ENCODE measurements at regions of chr17 and their contacts with region 1.

Region 1: DNA sequence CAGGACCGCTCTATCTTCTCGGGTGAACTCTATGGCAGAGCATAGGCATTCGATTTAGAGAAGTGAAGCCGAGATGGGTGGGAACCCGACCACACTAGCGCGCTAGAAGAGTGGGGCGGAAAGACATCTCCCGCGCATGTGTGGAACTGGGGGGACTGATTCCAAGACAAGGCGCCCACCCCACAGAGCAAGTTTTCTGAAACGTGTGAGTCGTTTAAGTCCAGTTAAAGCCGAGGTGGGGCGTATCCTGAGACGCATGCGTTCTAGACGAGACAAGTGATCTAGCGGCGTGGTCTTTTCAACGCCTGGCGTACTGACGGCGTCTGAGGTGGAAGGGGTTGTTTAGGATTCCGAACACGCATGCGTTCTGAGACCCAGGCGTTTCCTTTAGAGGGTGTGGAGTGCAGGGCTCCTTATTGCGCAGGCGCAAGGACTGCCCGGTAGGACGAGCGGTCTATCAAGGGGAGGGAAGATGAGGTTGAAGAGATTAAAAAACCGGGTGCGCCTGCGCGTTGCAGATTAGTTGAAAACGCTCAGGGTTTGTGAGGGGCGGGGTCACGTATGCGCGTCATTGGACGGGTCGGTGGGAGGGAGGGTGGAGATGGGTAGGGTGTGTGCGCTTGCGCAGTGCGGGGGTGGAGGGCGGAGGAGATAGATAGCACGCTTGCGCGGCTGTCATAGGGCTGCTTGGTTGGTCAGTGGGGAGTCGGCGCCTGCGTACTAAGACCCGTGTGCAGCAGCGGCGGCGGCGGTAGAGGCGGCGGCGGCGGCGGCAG is at the start of gene EIF5A:
- DNase-seq: peak; percentile 99 to 100 (median 100)
- ATAC-seq: peak; percentile 79
- H3K4me3 ChIP-seq: peak within 1 kb of the TSS; percentile 78
- H3K4me3 Mint-ChIP-seq: peak within 1 kb of the TSS; percentile 90 to 99 (median 95)
- H3K27ac ChIP-seq: peak within 1 kb of the TSS; percentile 100
- H3K27ac Mint-ChIP-seq: peak within 1 kb of the TSS; percentile 98 to 100 (median 99)
- H3K4me1 ChIP-seq: peaks cover 19 to 20% of the 10 kb centered on the region in 2 donors
- H3K4me1 Mint-ChIP-seq: peaks cover 28 to 44% (median 35%) of the 10 kb centered on the region in 7 donors
- H3K27me3 ChIP-seq: no peaks in the 10 kb centered on the region
- H3K27me3 Mint-ChIP-seq: peaks cover 0 to 9% (median 0%) of the 10 kb centered on the region in 5 donors
- total RNA-seq, gene EIF5A: 237 to 666 (median 453) TPM

Region 2: GRCh38 chr17:7214300-7215135 is 92.6 kb before region 1 on chr17:
- CTCF ChIA-PET with region 1: no interaction called
- POLR2A ChIA-PET with region 1: interaction called, 3 read pairs
- intact Hi-C with region 1: loop called (anchors 1 kb)
- DNase-seq: peak; percentile 96 to 99 (median 97)
- ATAC-seq: peak; percentile 90
- H3K4me3 ChIP-seq: peak overlapping the region; percentile 61
- H3K4me3 Mint-ChIP-seq: peak overlapping the region; percentile 76 to 97 (median 94)
- H3K27ac ChIP-seq: peak overlapping the region; percentile 97
- H3K27ac Mint-ChIP-seq: peak overlapping the region; percentile 90 to 100 (median 99)
- H3K4me1 ChIP-seq: peaks cover 25 to 49% of the 10 kb centered on the region in 2 donors
- H3K4me1 Mint-ChIP-seq: peaks cover 36 to 69% (median 65%) of the 10 kb centered on the region in 7 donors
- H3K27me3 ChIP-seq: no peaks in the 10 kb centered on the region
- H3K27me3 Mint-ChIP-seq: peaks cover 0 to 16% (median 0%) of the 10 kb centered on the region in 5 donors

Region 3: GRCh38 chr17:7296189-7296902 is 10.8 kb before region 1 on chr17:
- CTCF ChIA-PET with region 1: interaction called, 4 read pairs
- POLR2A ChIA-PET with region 1: interaction called, 17 read pairs
- intact Hi-C with region 1: loop called in 1 of 2 experiments (anchors 1 kb)
- DNase-seq: peak in 5 of 9 donors; percentile 41 to 86 (median 62)
- ATAC-seq: peak; percentile 63
- H3K4me3 ChIP-seq: no peak overlapping the region
- H3K4me3 Mint-ChIP-seq: peak overlapping the region; percentile 18 to 89 (median 52)
- H3K27ac ChIP-seq: no peak overlapping the region
- H3K27ac Mint-ChIP-seq: peak overlapping the region in 2 of 9 donors; percentile 51 to 66
- H3K4me1 ChIP-seq: peaks cover 12 to 26% of the 10 kb centered on the region in 2 donors
- H3K4me1 Mint-ChIP-seq: peaks cover 6 to 30% (median 25%) of the 10 kb centered on the region in 7 donors
- H3K27me3 ChIP-seq: no peaks in the 10 kb centered on the region
- H3K27me3 Mint-ChIP-seq: peaks cover 4 to 54% (median 18%) of the 10 kb centered on the region in 5 donors

Region 4: DNA sequence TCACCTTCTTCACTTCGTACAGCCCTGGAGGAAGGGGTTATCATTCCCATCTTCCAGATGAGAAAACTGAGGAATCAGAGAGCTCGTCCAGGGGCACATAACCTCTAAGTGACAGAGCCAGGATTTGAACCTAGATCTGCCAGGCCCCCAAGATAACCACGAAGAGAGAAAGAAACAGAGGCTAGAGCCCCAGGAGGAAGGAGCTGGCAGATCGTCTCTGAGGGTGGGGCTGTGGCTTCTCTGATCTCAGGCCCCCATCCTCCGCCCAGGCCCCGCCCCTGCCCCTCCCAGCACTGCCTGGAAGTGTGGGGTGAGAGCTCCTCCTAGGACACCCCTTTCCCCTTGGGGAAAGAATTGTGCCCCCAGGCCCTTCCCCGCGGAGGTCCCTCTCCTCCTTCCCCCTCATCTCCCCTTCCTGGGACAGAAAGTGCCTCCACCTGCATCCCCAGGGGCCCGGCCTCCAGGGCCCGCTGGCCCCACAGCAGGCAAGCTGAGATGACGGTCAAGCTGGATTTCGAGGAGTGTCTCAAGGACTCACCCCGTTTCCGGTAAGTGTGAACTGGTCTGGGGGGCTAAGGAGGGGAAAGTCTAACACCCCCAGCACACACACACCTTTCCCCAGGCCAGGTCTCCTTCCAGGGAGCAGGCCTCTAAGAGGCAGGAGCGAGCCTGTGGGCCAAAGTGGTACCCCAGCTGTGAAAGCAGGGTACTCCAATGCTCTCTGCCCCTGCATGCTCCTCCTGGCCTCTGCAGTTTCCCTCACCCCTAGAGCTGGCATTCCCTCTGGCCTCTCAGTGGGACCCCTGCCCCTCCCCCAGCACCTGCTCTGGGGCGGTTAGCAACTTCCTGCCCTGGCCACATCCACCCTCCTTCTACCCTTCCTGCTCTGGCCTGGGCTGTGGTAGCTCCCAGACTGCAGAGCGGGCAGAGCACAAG is 29.4 kb after region 1 on chr17 and contains the start of gene ACAP1:
- CTCF ChIA-PET with region 1: no interaction called
- POLR2A ChIA-PET with region 1: interaction called, 336 read pairs
- intact Hi-C with region 1: loop called (anchors 1 to 2 kb)
- DNase-seq: peak; percentile 56 to 85 (median 82)
- ATAC-seq: peak; percentile 99
- H3K4me3 ChIP-seq: peak within 1 kb of the TSS; percentile 99
- H3K4me3 Mint-ChIP-seq: peak within 1 kb of the TSS; percentile 89 to 99 (median 94)
- H3K27ac ChIP-seq: peak within 1 kb of the TSS; percentile 81
- H3K27ac Mint-ChIP-seq: peak within 1 kb of the TSS; percentile 89 to 100 (median 95)
- H3K4me1 ChIP-seq: peaks cover 31 to 44% of the 10 kb centered on the region in 2 donors
- H3K4me1 Mint-ChIP-seq: peaks cover 49 to 76% (median 60%) of the 10 kb centered on the region in 7 donors
- H3K27me3 ChIP-seq: no peaks in the 10 kb centered on the region
- H3K27me3 Mint-ChIP-seq: no peaks in the 10 kb centered on the region
- total RNA-seq, gene ACAP1: 482 to 708 (median 599) TPM

Region 5: DNA sequence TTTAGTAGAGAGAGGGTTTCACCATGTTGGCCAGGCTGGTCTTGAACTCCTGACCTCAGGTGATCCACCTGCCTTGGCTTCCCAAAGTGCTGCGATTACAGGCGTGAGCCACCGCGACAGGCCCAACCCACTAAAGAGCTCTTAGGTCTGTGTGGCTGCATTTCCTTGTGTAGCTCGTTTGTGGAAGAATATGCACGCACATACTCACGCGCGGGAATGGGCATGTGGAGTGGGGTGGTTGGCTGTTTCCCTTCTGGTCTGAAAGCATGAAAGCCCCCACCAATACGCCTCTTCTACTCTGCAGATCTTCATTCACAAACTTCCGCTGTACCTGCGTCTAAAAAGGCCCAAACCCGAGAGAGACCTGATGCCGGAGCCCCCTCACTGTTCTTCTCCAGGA is 147.9 kb after region 1 on chr17:
- CTCF ChIA-PET with region 1: no interaction called
- POLR2A ChIA-PET with region 1: interaction called, 5 read pairs
- intact Hi-C with region 1: loop called in 1 of 2 experiments (anchors 1 kb)
- DNase-seq: no peak
- ATAC-seq: peak; percentile 26
- H3K4me3 ChIP-seq: peak overlapping the region; percentile 92
- H3K4me3 Mint-ChIP-seq: peak overlapping the region; percentile 89 to 96 (median 95)
- H3K27ac ChIP-seq: peak overlapping the region; percentile 77
- H3K27ac Mint-ChIP-seq: peak overlapping the region; percentile 86 to 97 (median 94)
- H3K4me1 ChIP-seq: peaks cover 17 to 20% of the 10 kb centered on the region in 2 donors
- H3K4me1 Mint-ChIP-seq: peaks cover 13 to 44% (median 36%) of the 10 kb centered on the region in 7 donors
- H3K27me3 ChIP-seq: no peaks in the 10 kb centered on the region
- H3K27me3 Mint-ChIP-seq: no peaks in the 10 kb centered on the region

Region 6: GRCh38 chr17:7844292-7845154 is 537.4 kb after region 1 on chr17:
- CTCF ChIA-PET with region 1: no interaction called
- POLR2A ChIA-PET with region 1: no interaction called
- intact Hi-C with region 1: loop called in 1 of 2 experiments (anchors 2 kb)
- DNase-seq: peak; percentile 74 to 87 (median 79)
- ATAC-seq: peak; percentile 42
- H3K4me3 ChIP-seq: peak overlapping the region; percentile 84
- H3K4me3 Mint-ChIP-seq: peak overlapping the region; percentile 85 to 99 (median 94)
- H3K27ac ChIP-seq: peak overlapping the region; percentile 100
- H3K27ac Mint-ChIP-seq: peak overlapping the region; percentile 90 to 100 (median 99)
- H3K4me1 ChIP-seq: peaks cover 11 to 26% of the 10 kb centered on the region in 2 donors
- H3K4me1 Mint-ChIP-seq: peaks cover 19 to 41% (median 29%) of the 10 kb centered on the region in 7 donors
- H3K27me3 ChIP-seq: no peaks in the 10 kb centered on the region
- H3K27me3 Mint-ChIP-seq: peaks cover 0 to 2% (median 0%) of the 10 kb centered on the region in 5 donors

Measured in naive thymus-derived CD4-positive, alpha-beta T cell (primary cell).